ENCODE measurements at regions of chr6 and their contacts with region 1.

Region 1: GRCh38 chr6:157221007-157221816 is 102.1 kb downstream of the TMEM242 start:
- DNase-seq: peak; percentile 80
- H3K4me3 Mint-ChIP-seq: peak overlapping the region; percentile 79
- H3K27ac Mint-ChIP-seq: peak overlapping the region; percentile 82
- H3K4me1 Mint-ChIP-seq: peaks cover 33% of the 10 kb centered on the region
- H3K27me3 Mint-ChIP-seq: peaks cover 4% of the 10 kb centered on the region

Region 2: GRCh38 chr6:156901309-156902019 is 319.7 kb before region 1 on chr6:
- intact Hi-C with region 1: no loop called
- DNase-seq: no peak
- H3K4me3 Mint-ChIP-seq: no peak overlapping the region
- H3K27ac Mint-ChIP-seq: no peak overlapping the region
- H3K4me1 Mint-ChIP-seq: peaks cover 22% of the 10 kb centered on the region
- H3K27me3 Mint-ChIP-seq: no peaks in the 10 kb centered on the region

Region 3: GRCh38 chr6:157235600-157236039 is 14.4 kb after region 1 on chr6:
- intact Hi-C with region 1: loop called (anchors 1 kb)
- DNase-seq: peak; percentile 33
- H3K4me3 Mint-ChIP-seq: peak overlapping the region; percentile 87
- H3K27ac Mint-ChIP-seq: no peak overlapping the region
- H3K4me1 Mint-ChIP-seq: peaks cover 15% of the 10 kb centered on the region
- H3K27me3 Mint-ChIP-seq: peaks cover 44% of the 10 kb centered on the region

Region 4: GRCh38 chr6:157267109-157267611 is 45.9 kb after region 1 on chr6:
- intact Hi-C with region 1: no loop called
- DNase-seq: no peak
- H3K4me3 Mint-ChIP-seq: no peak overlapping the region
- H3K27ac Mint-ChIP-seq: no peak overlapping the region
- H3K4me1 Mint-ChIP-seq: no peaks in the 10 kb centered on the region
- H3K27me3 Mint-ChIP-seq: no peaks in the 10 kb centered on the region

Measured in activated T-helper 1 cell treated with anti-CD3 and anti-CD28 coated beads, Interleukin-12 subunit alpha, Interleukin-12 subunit beta, Interleukin-2, Interleukin-4 antibody, amounts not matched to agents 30 ng/mL and 10 ng/mL and 1 ng/mL, durations not matched to agents 14 hours and 24 hours and 36 hours (primary cell).